ENCODE measurements at regions of chr10 and their contacts with region 1.

Region 1: DNA sequence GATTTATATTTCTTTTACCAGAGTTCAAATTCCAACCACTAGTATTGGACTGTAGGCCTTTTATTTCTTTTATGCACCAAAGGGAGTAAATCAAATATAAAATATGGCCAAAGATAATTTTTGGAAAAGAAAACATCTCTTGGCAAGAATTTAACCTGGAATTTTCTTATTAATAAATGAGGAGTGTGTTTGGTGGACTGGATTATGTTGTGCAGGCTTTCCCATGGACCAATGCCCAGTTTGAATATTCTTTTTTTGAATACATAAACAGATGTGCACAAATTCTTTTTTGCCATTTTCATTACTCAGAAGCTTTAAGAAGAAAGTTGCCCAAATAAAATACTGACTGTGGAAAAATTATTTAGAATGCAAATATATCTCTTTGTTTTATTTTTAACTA is 22.1 kb upstream of the PRKG1 start:
- DNase-seq: no peak
- H3K4me3 ChIP-seq: no peak overlapping the region
- H3K27ac ChIP-seq: no peak overlapping the region
- H3K4me1 ChIP-seq: no peaks in the 10 kb centered on the region
- CTCF ChIP-seq: no peak

Region 2: GRCh38 chr10:51029172-51029641 is 23.0 kb before region 1 on chr10:
- CTCF ChIA-PET with region 1: no interaction called
- POLR2A ChIA-PET with region 1: no interaction called
- intact Hi-C with region 1: no loop called
- DNase-seq: no peak
- H3K4me3 ChIP-seq: no peak overlapping the region
- H3K27ac ChIP-seq: no peak overlapping the region
- H3K4me1 ChIP-seq: no peaks in the 10 kb centered on the region
- CTCF ChIP-seq: no peak

Region 3: DNA sequence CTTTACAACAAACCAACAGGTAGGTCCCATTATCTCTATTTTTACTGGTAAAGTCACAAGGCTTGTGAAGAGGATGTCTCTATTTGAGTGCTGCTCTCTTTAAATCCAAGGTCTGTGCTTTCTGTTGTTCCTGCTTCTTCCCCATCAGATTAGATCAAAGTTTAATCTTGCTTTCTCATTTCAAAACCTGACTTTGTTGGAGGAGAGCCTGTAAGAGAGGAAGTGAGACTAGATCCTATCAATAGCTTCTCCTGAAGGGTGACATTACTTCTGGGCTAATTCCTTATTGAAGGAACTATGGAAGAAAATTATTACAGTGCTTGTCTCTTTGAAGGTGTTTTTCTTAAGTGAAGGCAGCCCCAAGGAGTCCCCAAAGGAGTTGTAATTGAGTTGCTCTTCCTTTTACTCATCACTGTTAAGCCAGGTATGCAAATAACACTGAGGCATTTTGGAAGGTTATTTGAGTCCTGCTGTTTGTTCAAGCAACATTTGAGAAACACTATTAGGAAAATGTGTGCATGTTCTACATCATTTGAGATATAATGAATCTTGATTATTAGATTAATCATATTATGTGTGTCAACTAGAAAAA is 1866.6 kb after region 1 on chr10:
- CTCF ChIA-PET with region 1: no interaction called
- POLR2A ChIA-PET with region 1: interaction called, 10 read pairs
- intact Hi-C with region 1: no loop called
- DNase-seq: no peak
- H3K4me3 ChIP-seq: no peak overlapping the region
- H3K27ac ChIP-seq: no peak overlapping the region
- H3K4me1 ChIP-seq: no peaks in the 10 kb centered on the region
- CTCF ChIP-seq: no peak